Panc1 (cell line): ENCODE measurements at regions of chr2 and their contacts with region 1.

Region 1: GRCh38 chr2:7672027-7672684 is 754.9 kb downstream of the RNF144A start:
- DNase-seq: peak; percentile 38
- ATAC-seq: no peak
- H3K4me3 ChIP-seq: no peak overlapping the region
- H3K27ac ChIP-seq: no peak overlapping the region
- H3K4me1 ChIP-seq: no peaks in the 10 kb centered on the region
- H3K27me3 ChIP-seq: no peaks in the 10 kb centered on the region
- CTCF ChIP-seq: peak; percentile 82

Region 2: DNA sequence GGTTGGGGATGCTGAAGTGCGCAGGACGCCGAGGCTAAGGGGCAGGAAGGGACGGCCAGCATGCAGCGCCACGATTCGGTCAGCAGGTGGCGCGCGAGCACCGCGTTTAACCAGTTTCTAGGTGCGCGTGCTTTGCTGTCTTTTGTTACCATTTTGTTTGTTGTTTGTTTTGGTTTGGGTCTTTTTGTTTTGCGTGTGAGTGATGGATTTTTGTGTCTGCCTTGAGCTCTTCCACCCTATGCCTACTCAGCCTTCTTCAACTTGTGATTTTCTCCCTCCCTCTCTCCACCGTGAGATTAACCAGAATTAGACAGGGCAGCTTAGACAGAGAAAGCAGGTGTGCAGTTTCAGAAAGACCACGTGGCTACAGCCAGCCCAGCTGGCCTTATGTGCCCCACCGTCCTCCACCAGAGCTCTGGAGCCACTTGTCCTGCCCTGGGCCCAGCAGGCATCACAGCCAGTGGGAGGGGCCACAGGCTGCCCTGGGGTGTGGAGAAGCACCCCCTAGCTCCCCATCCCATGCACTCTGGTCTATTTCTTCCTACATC is 574.7 kb before region 1 on chr2:
- CTCF ChIA-PET with region 1: no interaction called
- POLR2A ChIA-PET with region 1: no interaction called
- in situ Hi-C with region 1: no loop called
- intact Hi-C with region 1: loop called (anchors 5 kb)
- DNase-seq: peak; percentile 52
- ATAC-seq: peak; percentile 97
- H3K4me3 ChIP-seq: peak overlapping the region in 1 of 2 experiments; percentile 19; a peak in 1 of 4 replicates
- H3K27ac ChIP-seq: no peak overlapping the region
- H3K4me1 ChIP-seq: no peaks in the 10 kb centered on the region; the same call in 1 of the 2 replicates
- H3K27me3 ChIP-seq: no peaks in the 10 kb centered on the region; the same call in 1 of the 2 replicates
- CTCF ChIP-seq: peak; percentile 96

Region 3: DNA sequence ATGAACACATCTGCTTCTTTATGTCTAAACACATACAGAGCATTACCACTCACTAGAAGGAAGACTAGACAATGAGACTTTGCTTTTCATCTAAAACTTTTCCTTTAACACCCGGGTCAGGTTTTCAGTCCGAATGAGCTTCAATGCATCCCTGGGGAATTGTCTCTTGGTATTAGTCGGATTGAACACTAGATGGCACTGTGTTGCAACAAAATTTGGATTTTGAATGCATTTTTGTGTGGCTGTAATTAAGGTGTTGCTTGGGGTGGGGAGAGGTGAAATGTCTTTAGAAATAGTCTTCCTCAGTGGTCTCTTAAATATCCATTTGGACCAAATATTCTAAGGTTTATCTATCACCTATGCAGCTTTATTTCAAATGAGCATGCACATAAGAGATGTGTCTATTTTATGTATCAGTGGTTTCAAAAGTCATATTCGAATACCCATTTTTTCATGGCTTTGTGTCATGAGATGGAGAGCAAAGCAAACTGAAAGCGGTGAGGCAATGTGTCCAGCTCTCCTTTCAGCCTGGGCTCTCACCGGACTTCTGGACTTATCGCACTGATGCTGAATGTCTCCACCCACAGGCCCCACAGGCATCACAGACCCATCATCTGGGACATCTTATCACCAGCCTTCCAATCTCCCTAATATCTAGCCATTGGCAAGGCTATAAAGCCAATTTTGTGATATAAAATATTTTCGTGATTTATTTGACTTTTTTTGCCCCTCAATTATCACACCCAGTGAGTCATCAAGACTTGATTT is 244.7 kb before region 1 on chr2:
- CTCF ChIA-PET with region 1: no interaction called
- POLR2A ChIA-PET with region 1: no interaction called
- in situ Hi-C with region 1: no loop called
- intact Hi-C with region 1: loop called (anchors 1 kb)
- DNase-seq: peak; percentile 30
- ATAC-seq: 0 out of 2 replicates have a peak, but pooled peaks have one; percentile 60
- H3K4me3 ChIP-seq: no peak overlapping the region
- H3K27ac ChIP-seq: no peak overlapping the region
- H3K4me1 ChIP-seq: no peaks in the 10 kb centered on the region
- H3K27me3 ChIP-seq: peaks cover 7% of the 10 kb centered on the region
- CTCF ChIP-seq: peak; percentile 68